ENCODE measurements at regions of chr6 and their contacts with region 1.

Region 1: DNA sequence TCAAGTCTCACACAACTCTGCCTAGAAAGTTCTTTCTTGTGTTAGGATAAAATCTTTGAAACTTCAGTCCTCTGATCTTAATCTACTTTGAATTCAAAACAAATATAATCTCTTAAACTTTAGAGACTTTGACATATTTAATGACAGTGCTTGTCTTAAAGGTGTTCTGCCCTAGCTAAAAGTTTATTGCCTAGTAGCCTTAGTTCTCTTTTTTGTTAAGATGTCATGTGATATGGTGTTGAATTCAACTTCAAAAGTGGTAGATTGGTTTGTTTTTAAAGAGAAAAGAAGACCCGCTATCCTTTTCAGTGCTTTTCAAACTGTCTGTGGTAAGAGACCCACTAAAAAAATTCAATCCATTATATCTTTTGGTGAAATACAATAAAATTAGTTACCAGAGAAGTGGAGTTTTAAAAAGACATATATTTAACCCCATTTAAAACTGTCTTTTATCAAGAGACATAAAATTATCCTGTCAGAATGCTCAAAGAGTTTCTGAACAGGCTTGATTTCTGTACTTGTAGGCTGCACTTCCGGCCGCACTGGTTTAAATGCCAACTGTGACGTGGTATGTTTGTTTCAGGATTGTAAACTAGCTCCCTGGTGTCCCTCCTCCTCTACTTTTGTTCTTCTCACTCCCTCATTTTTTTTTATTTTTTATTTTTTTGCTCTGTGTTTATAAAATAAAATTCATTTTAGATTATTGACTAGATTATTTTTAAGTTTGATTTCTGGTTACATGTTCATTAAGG is 76.5 kb downstream of the QKI start:
- DNase-seq: peak; percentile 77
- ATAC-seq: no peak
- H3K4me3 ChIP-seq: no peak overlapping the region
- H3K27ac ChIP-seq: peak overlapping the region; percentile 91
- H3K4me1 ChIP-seq: peaks cover 56% of the 10 kb centered on the region
- H3K27me3 ChIP-seq: no peaks in the 10 kb centered on the region
- CTCF ChIP-seq: no peak

Region 2: DNA sequence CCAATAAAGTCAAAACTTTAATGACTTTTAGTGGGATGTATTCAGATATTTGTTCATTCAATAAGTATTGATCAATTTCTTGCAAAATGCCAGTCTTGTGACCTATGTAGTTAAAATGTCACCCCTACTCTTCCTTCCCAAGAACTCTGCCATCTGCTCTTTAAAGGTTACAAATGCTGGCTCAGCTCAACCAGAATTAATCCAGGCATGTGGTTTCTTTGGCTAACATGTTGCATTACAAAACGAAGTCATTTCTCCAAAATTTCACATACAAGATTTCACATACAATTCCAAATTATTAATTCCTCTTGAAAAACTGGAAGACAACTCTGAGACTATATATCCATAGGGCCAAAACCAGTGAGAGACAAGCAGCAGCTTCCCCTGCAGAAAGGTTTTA is 1159.1 kb before region 1 on chr6:
- CTCF ChIA-PET with region 1: no interaction called
- POLR2A ChIA-PET with region 1: no interaction called
- intact Hi-C with region 1: no loop called
- DNase-seq: no peak
- ATAC-seq: no peak
- H3K4me3 ChIP-seq: no peak overlapping the region
- H3K27ac ChIP-seq: no peak overlapping the region
- H3K4me1 ChIP-seq: no peaks in the 10 kb centered on the region
- H3K27me3 ChIP-seq: 0 out of 2 replicates have a peak, but pooled peaks cover 3% of the 10 kb centered on the region
- CTCF ChIP-seq: no peak

Region 3: GRCh38 chr6:163419413-163420288 is 71.4 kb before region 1 on chr6:
- CTCF ChIA-PET with region 1: no interaction called
- POLR2A ChIA-PET with region 1: no interaction called
- intact Hi-C with region 1: loop called (anchors 2 kb)
- DNase-seq: peak; percentile 28
- ATAC-seq: no peak
- H3K4me3 ChIP-seq: peak overlapping the region; percentile 68
- H3K27ac ChIP-seq: no peak overlapping the region
- H3K4me1 ChIP-seq: peaks cover 33% of the 10 kb centered on the region
- H3K27me3 ChIP-seq: no peaks in the 10 kb centered on the region
- CTCF ChIP-seq: no peak

Region 4: GRCh38 chr6:163438940-163439335 is 52.1 kb before region 1 on chr6:
- CTCF ChIA-PET with region 1: no interaction called
- POLR2A ChIA-PET with region 1: no interaction called
- intact Hi-C with region 1: no loop called
- DNase-seq: no peak
- ATAC-seq: no peak
- H3K4me3 ChIP-seq: no peak overlapping the region
- H3K27ac ChIP-seq: no peak overlapping the region
- H3K4me1 ChIP-seq: peaks cover 26% of the 10 kb centered on the region; the same call in 1 of the 2 replicates
- H3K27me3 ChIP-seq: no peaks in the 10 kb centered on the region
- CTCF ChIP-seq: no peak

Region 5: DNA sequence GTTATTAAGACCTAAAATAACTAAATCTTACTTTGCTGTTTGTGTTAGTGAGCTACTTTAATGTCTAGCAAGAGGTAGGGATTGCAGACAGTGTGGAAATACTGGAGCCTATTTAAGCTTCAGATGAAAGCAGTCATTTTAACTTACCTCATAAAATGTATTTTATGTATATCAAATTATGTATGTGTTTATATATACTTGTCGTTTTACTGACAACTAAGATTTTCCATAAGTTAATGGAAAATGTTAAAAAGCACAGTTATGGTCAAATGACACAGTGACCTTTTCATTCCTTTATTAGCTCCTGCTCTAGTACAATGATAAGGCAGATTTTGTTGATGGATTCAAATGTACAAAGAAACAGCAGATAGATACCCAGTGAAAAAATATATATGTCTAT is 41.9 kb before region 1 on chr6:
- CTCF ChIA-PET with region 1: no interaction called
- POLR2A ChIA-PET with region 1: no interaction called
- intact Hi-C with region 1: loop called (anchors 5 kb)
- DNase-seq: no peak
- ATAC-seq: no peak
- H3K4me3 ChIP-seq: no peak overlapping the region
- H3K27ac ChIP-seq: no peak overlapping the region
- H3K4me1 ChIP-seq: no peaks in the 10 kb centered on the region
- H3K27me3 ChIP-seq: no peaks in the 10 kb centered on the region
- CTCF ChIP-seq: no peak

Region 6: GRCh38 chr6:163529605-163530004 is 38.6 kb after region 1 on chr6:
- CTCF ChIA-PET with region 1: no interaction called
- POLR2A ChIA-PET with region 1: no interaction called
- intact Hi-C with region 1: loop called (anchors 5 kb)
- DNase-seq: peak; percentile 74
- ATAC-seq: peak; percentile 82
- H3K4me3 ChIP-seq: no peak overlapping the region
- H3K27ac ChIP-seq: peak overlapping the region; percentile 34
- H3K4me1 ChIP-seq: peaks cover 37% of the 10 kb centered on the region
- H3K27me3 ChIP-seq: no peaks in the 10 kb centered on the region
- CTCF ChIP-seq: no peak

Measured in PC-3 (cell line).